Sciatic nerve (tissue), 2 donors: ENCODE measurements at regions of chr4 and their contacts with region 1.

Region 1: DNA sequence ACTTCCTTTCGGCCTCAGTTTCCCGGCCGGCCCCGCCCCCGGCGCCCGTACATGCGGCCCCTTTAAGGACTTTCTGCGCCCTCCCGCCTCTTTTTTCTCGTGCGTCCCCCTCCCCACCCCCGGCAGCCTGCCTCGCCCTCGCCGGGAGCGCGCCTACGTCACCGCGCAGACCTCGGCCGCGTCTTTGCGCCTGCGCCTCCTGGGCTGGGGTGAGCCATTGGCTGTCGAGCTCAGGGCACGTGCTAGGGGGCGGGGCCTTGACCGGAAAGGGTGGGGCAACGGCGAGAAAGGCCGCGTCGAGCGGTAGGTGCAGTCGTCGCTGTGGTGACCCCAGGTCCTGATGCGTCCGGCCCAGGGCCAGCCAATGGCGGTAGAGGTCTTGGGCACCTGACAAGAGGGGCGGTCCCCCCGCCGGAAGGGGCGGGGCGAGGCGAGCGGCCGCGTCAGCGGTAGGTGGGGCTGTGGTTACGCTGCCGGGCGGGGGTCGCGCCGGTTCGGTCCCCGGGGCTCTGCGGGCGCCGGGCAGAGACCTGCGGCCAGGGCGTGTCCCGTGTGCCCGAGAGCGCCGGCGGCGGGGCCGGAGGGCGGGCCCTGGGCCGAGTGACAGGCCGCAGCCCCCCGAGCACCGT is at the start of gene UVSSA:
- DNase-seq: peak; percentile 100
- ATAC-seq: peak; percentile 98
- total RNA-seq, gene UVSSA: 33.5 TPM

Region 2: GRCh38 chr4:866761-867390 is 480.0 kb before region 1 on chr4:
- intact Hi-C with region 1: no loop called
- DNase-seq: no peak
- ATAC-seq: no peak

Region 3: GRCh38 chr4:1249148-1249730 is 97.7 kb before region 1 on chr4:
- intact Hi-C with region 1: loop called (anchors 5 kb)
- DNase-seq: peak; percentile 90
- ATAC-seq: peak; percentile 74

Region 4: GRCh38 chr4:1323635-1324442 is 23.1 kb before region 1 on chr4:
- intact Hi-C with region 1: no loop called
- DNase-seq: no peak
- ATAC-seq: no peak

Region 5: GRCh38 chr4:1899149-1900086 is 552.5 kb after region 1 on chr4:
- intact Hi-C with region 1: no loop called
- DNase-seq: peak; percentile 78
- ATAC-seq: peak; percentile 93